Natural killer cell (primary cell): ENCODE measurements at regions of chr10 and their contacts with region 1.

Region 1: GRCh38 chr10:79445141-79445976 is at the start of gene ZCCHC24:
- DNase-seq: peak; percentile 90 to 97
- ATAC-seq: peak; percentile 89 to 96 (median 90)
- H3K4me3 ChIP-seq: peak within 1 kb of the TSS; percentile 43
- H3K4me3 Mint-ChIP-seq: peak within 1 kb of the TSS; percentile 91
- H3K27ac ChIP-seq: peak within 1 kb of the TSS; percentile 12
- H3K27ac Mint-ChIP-seq: peak within 1 kb of the TSS; percentile 68 to 86
- H3K4me1 ChIP-seq: peaks cover 34% of the 10 kb centered on the region
- H3K4me1 Mint-ChIP-seq: peaks cover 28 to 33% of the 10 kb centered on the region in 2 donors
- H3K27me3 ChIP-seq: no peaks in the 10 kb centered on the region
- H3K27me3 Mint-ChIP-seq: peaks cover 0 to 3% of the 10 kb centered on the region in 2 donors
- CTCF ChIP-seq: no peak
- total RNA-seq, gene ZCCHC24: 2.8 to 4.0 (median 3.6) TPM

Region 2: DNA sequence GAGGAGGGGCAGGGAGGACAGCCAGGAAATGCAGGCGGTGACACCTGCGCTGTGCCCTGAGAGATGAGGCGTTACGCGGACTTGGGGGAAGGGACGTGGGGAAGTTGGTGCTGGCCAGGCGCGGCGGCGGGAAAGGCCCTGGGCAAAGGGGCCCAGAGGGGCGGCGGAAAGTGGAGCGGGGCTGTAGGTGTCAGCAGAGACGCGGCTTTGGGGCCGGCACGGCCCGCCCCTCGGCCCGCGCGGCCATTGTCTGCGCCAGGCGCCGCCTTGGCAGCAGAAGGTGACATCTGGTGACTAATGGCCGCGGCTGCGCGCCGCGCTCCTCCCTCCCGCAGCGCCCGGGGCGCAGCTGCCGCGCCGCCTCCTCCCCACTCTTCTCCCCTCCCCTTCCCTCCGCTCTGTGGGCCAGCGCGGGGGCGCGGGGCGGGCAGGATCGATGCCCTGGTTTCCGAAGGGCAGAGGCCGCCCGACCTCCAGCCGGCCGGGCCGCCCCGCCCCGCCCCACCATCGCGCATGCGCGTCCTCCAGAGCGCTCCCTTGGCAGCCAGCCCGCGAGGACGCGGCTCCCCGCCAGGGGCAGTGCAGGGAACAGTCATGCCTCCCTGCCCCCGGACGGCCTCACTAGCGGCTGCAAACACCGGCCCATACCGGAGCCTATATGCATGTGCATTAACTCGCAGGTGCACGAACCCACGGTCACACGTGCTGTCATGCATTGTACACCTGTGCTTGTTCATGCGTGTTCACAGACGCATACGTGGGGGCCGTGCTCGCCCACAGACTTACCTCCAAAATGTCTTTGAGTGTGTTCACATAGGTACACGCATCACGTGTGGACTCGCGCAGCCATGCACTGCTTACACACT is 1142.1 kb before region 1 on chr10:
- intact Hi-C with region 1: loop called (anchors 5 kb)
- DNase-seq: peak; percentile 94 to 96
- ATAC-seq: peak; percentile 84 to 96 (median 85)
- H3K4me3 ChIP-seq: peak overlapping the region; percentile 64
- H3K4me3 Mint-ChIP-seq: peak overlapping the region; percentile 87
- H3K27ac ChIP-seq: peak overlapping the region; percentile 89
- H3K27ac Mint-ChIP-seq: peak overlapping the region; percentile 92 to 98
- H3K4me1 ChIP-seq: peaks cover 30% of the 10 kb centered on the region
- H3K4me1 Mint-ChIP-seq: peaks cover 10 to 23% of the 10 kb centered on the region in 2 donors
- H3K27me3 ChIP-seq: no peaks in the 10 kb centered on the region
- H3K27me3 Mint-ChIP-seq: peaks cover 11 to 14% of the 10 kb centered on the region in 2 donors
- CTCF ChIP-seq: peak; percentile 79

Region 3: DNA sequence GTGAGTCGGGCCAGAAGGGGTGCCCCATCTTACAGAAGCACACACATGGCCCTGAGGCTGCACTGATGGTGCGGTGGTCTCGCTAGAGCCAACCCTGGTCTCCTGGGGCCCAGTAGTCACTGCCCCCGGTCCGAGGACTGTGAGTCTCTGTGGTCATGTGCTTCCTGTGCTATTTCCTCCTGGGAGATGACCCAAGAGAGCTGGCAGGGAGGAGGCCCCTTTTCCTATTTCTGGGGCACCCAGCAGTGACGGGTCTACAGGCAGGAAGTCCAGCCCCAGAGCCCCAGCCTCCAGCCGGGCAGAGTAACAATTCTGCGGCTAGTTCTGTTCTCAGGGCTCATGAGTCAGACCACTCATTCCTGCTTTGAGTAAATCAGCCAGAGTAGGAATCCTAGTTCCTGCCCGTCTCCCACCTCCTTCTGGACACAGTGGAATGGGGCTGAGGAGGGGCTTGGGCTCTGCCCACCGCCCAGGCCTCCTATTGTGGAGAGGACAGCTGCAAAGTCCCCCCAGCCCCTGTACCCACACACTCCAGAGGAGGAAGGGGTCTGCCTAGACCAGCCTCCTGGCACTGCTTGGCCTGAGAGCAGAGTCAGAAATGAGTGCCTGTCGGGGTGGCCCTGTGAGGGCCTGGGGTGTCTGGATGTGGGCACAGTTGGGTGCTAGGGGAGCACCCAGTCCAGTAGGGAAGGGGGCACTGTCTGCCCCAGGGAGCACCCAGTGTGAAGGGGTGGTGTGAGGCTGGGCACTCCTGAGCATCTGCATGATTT is 178.6 kb before region 1 on chr10:
- intact Hi-C with region 1: no loop called
- DNase-seq: peak; percentile 30 to 43
- ATAC-seq: peak; percentile 71 to 82 (median 80)
- H3K4me3 ChIP-seq: no peak overlapping the region
- H3K4me3 Mint-ChIP-seq: peak overlapping the region; percentile 68
- H3K27ac ChIP-seq: peak overlapping the region; percentile 73
- H3K27ac Mint-ChIP-seq: peak overlapping the region; percentile 88 to 95
- H3K4me1 ChIP-seq: peaks cover 85% of the 10 kb centered on the region
- H3K4me1 Mint-ChIP-seq: peaks cover 54 to 89% of the 10 kb centered on the region in 2 donors
- H3K27me3 ChIP-seq: no peaks in the 10 kb centered on the region
- H3K27me3 Mint-ChIP-seq: no peaks in the 10 kb centered on the region
- CTCF ChIP-seq: no peak

Region 4: DNA sequence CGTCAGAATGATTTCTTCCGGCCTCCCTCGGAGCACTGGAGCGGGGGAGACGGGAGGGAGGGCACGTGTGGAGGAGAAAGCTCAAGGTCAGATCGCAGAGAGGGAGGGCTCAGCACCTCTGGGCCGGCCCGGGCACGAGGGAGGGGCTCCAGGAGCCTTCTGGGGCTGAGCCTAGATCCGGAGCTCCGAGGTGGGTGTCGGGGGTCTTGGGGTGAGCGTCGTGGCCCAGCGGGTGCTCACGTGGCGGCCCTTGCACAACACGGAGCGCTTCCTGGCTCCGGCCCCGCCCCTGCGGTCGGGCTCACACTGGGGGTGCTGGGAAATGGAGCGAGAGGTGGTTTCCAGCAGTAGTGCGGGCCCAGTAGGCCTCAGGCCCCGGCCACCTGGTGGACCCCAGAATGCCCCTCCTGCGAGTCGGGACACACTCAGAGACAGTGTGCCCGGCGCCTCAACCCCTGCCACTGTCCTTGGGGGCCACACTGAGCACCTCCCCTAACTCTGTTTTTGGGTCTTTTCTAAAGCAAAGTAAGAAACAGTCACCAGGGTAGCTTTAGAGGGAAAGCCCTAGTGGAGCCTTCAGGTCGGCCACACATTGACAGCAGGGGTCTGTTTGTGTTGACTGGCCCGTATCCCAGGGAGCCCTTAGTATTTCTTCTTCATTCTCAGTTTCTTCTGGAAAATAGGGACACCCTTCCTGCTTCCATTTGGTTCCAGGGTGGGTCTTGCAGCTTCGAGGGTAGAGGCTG is 97.3 kb before region 1 on chr10:
- intact Hi-C with region 1: loop called (anchors 2 kb)
- DNase-seq: peak; percentile 73 to 86
- ATAC-seq: peak; percentile 68 to 79 (median 71)
- H3K4me3 ChIP-seq: peak overlapping the region; percentile 81
- H3K4me3 Mint-ChIP-seq: peak overlapping the region; percentile 87
- H3K27ac ChIP-seq: peak overlapping the region; percentile 76
- H3K27ac Mint-ChIP-seq: peak overlapping the region; percentile 91 to 92
- H3K4me1 ChIP-seq: peaks cover 41% of the 10 kb centered on the region
- H3K4me1 Mint-ChIP-seq: peaks cover 17 to 45% of the 10 kb centered on the region in 2 donors
- H3K27me3 ChIP-seq: no peaks in the 10 kb centered on the region
- H3K27me3 Mint-ChIP-seq: no peaks in the 10 kb centered on the region
- CTCF ChIP-seq: no peak